CD4-positive, alpha-beta memory T cell (primary cell): ENCODE measurements at regions of chr3 and their contacts with region 1.

Region 1: DNA sequence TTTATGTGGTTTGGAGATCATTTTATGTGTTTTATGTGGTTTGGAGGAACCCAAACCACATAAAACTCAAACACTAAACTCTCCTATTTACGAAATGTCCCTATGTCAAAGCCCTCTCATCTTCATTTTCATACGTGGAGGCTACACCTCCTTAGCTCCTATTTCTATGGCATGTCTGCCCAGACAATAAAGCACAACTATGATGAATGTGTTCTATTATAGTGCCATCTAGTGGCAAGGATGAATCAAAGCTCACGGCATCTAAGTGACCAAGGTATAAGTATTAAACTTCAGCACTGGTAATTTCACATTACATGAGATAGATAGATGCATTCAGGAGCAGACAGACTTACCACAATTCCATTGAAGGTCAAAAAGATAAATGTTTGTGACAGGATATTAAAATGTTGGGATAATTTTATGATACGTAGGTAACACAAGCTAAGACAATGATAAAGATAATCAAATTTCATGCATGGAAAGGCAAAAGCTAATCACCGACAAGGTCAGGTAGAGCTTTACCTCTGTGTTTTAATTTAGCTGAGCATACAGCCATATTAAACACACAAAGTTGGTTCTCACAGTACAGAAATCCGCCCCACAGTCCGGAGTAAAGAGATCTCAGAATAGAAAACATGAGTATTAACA is 130.6 kb upstream of the FHIT start:
- DNase-seq: peak in 4 of 5 donors; percentile 34 to 40 (median 36)
- H3K4me3 ChIP-seq: no peak overlapping the region
- H3K4me3 Mint-ChIP-seq: no peak overlapping the region
- H3K27ac ChIP-seq: no peak overlapping the region
- H3K27ac Mint-ChIP-seq: no peak overlapping the region
- H3K4me1 ChIP-seq: no peaks in the 10 kb centered on the region
- H3K4me1 Mint-ChIP-seq: peaks cover 0 to 5% (median 4%) of the 10 kb centered on the region in 4 donors
- H3K27me3 ChIP-seq: no peaks in the 10 kb centered on the region
- H3K27me3 Mint-ChIP-seq: peaks cover 16% of the 10 kb centered on the region in 2 donors

Region 2: GRCh38 chr3:61371123-61371522 is 10.7 kb before region 1 on chr3:
- CTCF ChIA-PET with region 1: interaction called, 19 read pairs
- POLR2A ChIA-PET with region 1: no interaction called
- intact Hi-C with region 1: no loop called
- DNase-seq: peak in 1 of 5 donors; percentile 3
- H3K4me3 ChIP-seq: no peak overlapping the region
- H3K4me3 Mint-ChIP-seq: no peak overlapping the region
- H3K27ac ChIP-seq: no peak overlapping the region
- H3K27ac Mint-ChIP-seq: no peak overlapping the region
- H3K4me1 ChIP-seq: no peaks in the 10 kb centered on the region
- H3K4me1 Mint-ChIP-seq: no peaks in the 10 kb centered on the region
- H3K27me3 ChIP-seq: no peaks in the 10 kb centered on the region
- H3K27me3 Mint-ChIP-seq: no peaks in the 10 kb centered on the region

Region 3: GRCh38 chr3:61401359-61401758 is 19.5 kb after region 1 on chr3:
- CTCF ChIA-PET with region 1: no interaction called
- POLR2A ChIA-PET with region 1: no interaction called
- intact Hi-C with region 1: no loop called
- DNase-seq: no peak
- H3K4me3 ChIP-seq: no peak overlapping the region
- H3K4me3 Mint-ChIP-seq: no peak overlapping the region
- H3K27ac ChIP-seq: no peak overlapping the region
- H3K27ac Mint-ChIP-seq: no peak overlapping the region
- H3K4me1 ChIP-seq: no peaks in the 10 kb centered on the region
- H3K4me1 Mint-ChIP-seq: no peaks in the 10 kb centered on the region
- H3K27me3 ChIP-seq: no peaks in the 10 kb centered on the region
- H3K27me3 Mint-ChIP-seq: no peaks in the 10 kb centered on the region